CD4-positive, alpha-beta T cell (primary cell): ENCODE measurements at regions of chr12 and their contacts with region 1.

Region 1: GRCh38 chr12:123120452-123121166 is 30.3 kb downstream of the PITPNM2 start:
- DNase-seq: peak in 13 of 14 experiments; percentile 21 to 65 (median 39)
- ATAC-seq: peak; percentile 60
- H3K4me3 ChIP-seq: no peak overlapping the region
- H3K4me3 Mint-ChIP-seq: peak overlapping the region; percentile 82
- H3K27ac ChIP-seq: peak overlapping the region; percentile 58 to 77
- H3K27ac Mint-ChIP-seq: peak overlapping the region; percentile 99
- H3K4me1 ChIP-seq: peaks cover 67% of the 10 kb centered on the region
- H3K4me1 Mint-ChIP-seq: peaks cover 77% of the 10 kb centered on the region
- H3K27me3 ChIP-seq: no peaks in the 10 kb centered on the region
- H3K27me3 Mint-ChIP-seq: no peaks in the 10 kb centered on the region
- CTCF ChIP-seq: no peak

Region 2: GRCh38 chr12:123043536-123044001 is 77.0 kb before region 1 on chr12:
- CTCF ChIA-PET with region 1: interaction called, 6 read pairs
- POLR2A ChIA-PET with region 1: interaction called, 16 read pairs
- intact Hi-C with region 1: no loop called
- DNase-seq: peak; percentile 44 to 84 (median 68)
- ATAC-seq: peak; percentile 97
- H3K4me3 ChIP-seq: no peak overlapping the region
- H3K4me3 Mint-ChIP-seq: peak overlapping the region; percentile 42
- H3K27ac ChIP-seq: no peak overlapping the region
- H3K27ac Mint-ChIP-seq: peak overlapping the region; percentile 80
- H3K4me1 ChIP-seq: peaks cover 21% of the 10 kb centered on the region
- H3K4me1 Mint-ChIP-seq: peaks cover 27% of the 10 kb centered on the region
- H3K27me3 ChIP-seq: no peaks in the 10 kb centered on the region
- H3K27me3 Mint-ChIP-seq: no peaks in the 10 kb centered on the region
- CTCF ChIP-seq: peak; percentile 58

Region 3: DNA sequence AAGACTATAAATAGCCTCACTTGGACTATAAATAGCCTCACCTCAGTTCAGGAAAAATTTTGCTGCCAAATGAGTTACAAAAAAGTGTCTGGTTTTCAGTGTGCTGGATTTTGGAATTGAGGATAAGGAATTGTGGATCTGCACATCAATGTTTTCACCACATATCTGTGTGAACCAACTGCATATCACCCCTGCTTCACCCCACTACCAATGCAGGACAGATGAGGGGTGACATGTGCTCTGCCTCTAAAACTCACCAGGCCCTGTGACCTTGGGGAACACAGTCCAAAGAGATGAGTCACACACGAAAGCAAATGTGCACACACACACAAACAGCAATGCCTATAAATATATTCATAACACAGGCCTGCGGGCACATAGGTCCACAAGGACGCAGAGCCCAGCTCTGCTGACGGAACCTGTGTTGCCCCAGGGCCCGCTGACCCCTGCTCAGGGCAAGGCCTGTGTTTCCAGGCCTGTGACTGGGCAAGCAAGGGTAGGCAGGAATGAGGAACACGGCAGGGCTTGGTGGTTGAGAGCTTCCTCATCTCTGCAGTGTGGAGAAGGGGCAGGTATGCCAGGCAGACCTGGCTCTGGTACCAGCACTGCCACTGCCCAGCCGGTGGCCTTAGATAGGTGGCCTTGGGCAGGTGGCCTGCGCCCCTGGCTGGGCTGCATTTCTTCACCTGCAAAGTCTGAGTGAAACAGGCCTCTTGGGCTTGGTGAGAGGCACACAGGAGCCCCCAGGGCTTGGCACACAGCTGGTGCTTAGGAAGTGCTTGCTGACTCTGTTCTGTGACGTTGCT is 57.7 kb before region 1 on chr12:
- CTCF ChIA-PET with region 1: no interaction called
- POLR2A ChIA-PET with region 1: no interaction called
- intact Hi-C with region 1: no loop called
- DNase-seq: peak in 2 of 14 experiments; percentile 26 to 36
- ATAC-seq: no peak
- H3K4me3 ChIP-seq: no peak overlapping the region
- H3K4me3 Mint-ChIP-seq: no peak overlapping the region
- H3K27ac ChIP-seq: no peak overlapping the region
- H3K27ac Mint-ChIP-seq: peak overlapping the region; percentile 66
- H3K4me1 ChIP-seq: peaks cover 52% of the 10 kb centered on the region
- H3K4me1 Mint-ChIP-seq: peaks cover 60% of the 10 kb centered on the region
- H3K27me3 ChIP-seq: no peaks in the 10 kb centered on the region
- H3K27me3 Mint-ChIP-seq: no peaks in the 10 kb centered on the region
- CTCF ChIP-seq: no peak

Region 4: GRCh38 chr12:123106628-123107359 is 13.8 kb before region 1 on chr12:
- CTCF ChIA-PET with region 1: interaction called, 3 read pairs
- POLR2A ChIA-PET with region 1: interaction called, 58 read pairs
- intact Hi-C with region 1: no loop called
- DNase-seq: peak in 13 of 14 experiments; percentile 28 to 84 (median 57)
- ATAC-seq: peak; percentile 94
- H3K4me3 ChIP-seq: peak overlapping the region; percentile 29
- H3K4me3 Mint-ChIP-seq: peak overlapping the region; percentile 66
- H3K27ac ChIP-seq: peak overlapping the region; percentile 56 to 85
- H3K27ac Mint-ChIP-seq: peak overlapping the region; percentile 98
- H3K4me1 ChIP-seq: peaks cover 53% of the 10 kb centered on the region
- H3K4me1 Mint-ChIP-seq: peaks cover 64% of the 10 kb centered on the region
- H3K27me3 ChIP-seq: no peaks in the 10 kb centered on the region
- H3K27me3 Mint-ChIP-seq: no peaks in the 10 kb centered on the region
- CTCF ChIP-seq: no peak

Region 5: DNA sequence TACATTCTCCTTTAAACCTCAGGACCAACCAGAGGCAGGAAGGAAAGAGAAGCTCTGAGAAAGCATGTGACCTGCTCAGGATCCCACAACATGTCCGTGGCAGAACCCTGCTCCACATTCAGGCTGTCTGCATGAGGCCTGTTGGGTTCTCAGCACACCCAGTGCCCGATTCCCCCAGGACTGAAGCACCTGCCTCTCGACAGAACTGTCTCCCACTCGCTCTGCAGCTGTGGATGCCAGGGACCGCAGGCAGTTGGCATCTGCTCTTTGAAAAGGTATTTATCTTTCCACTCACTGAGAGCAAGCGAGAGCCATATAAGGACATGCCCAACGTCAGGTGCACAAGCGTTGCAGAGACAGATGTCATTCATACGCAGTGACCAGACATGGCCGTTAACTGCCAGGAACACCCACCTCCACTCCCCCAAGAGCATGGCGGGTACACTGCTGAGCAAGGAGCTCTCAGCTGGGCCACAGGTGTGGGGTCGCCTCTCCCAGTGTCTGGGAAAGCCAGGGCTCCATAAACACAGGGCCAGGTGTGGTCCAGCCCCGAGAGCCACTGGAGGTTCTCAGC is 11.4 kb after region 1 on chr12:
- CTCF ChIA-PET with region 1: no interaction called
- POLR2A ChIA-PET with region 1: interaction called, 47 read pairs
- intact Hi-C with region 1: no loop called
- DNase-seq: peak in 12 of 14 experiments; percentile 22 to 81 (median 51)
- ATAC-seq: peak; percentile 90
- H3K4me3 ChIP-seq: peak overlapping the region; percentile 25
- H3K4me3 Mint-ChIP-seq: peak overlapping the region; percentile 49
- H3K27ac ChIP-seq: peak overlapping the region; percentile 62 to 63
- H3K27ac Mint-ChIP-seq: peak overlapping the region; percentile 91
- H3K4me1 ChIP-seq: peaks cover 24% of the 10 kb centered on the region
- H3K4me1 Mint-ChIP-seq: peaks cover 58% of the 10 kb centered on the region
- H3K27me3 ChIP-seq: no peaks in the 10 kb centered on the region
- H3K27me3 Mint-ChIP-seq: no peaks in the 10 kb centered on the region
- CTCF ChIP-seq: no peak

Region 6: GRCh38 chr12:123142921-123143735 is 22.5 kb after region 1 on chr12:
- CTCF ChIA-PET with region 1: no interaction called
- POLR2A ChIA-PET with region 1: interaction called, 36 read pairs
- intact Hi-C with region 1: no loop called
- DNase-seq: peak in 1 of 14 experiments; percentile 32
- ATAC-seq: no peak
- H3K4me3 ChIP-seq: no peak overlapping the region
- H3K4me3 Mint-ChIP-seq: no peak overlapping the region
- H3K27ac ChIP-seq: no peak overlapping the region
- H3K27ac Mint-ChIP-seq: peak overlapping the region; percentile 54
- H3K4me1 ChIP-seq: peaks cover 9% of the 10 kb centered on the region
- H3K4me1 Mint-ChIP-seq: peaks cover 62% of the 10 kb centered on the region
- H3K27me3 ChIP-seq: no peaks in the 10 kb centered on the region
- H3K27me3 Mint-ChIP-seq: no peaks in the 10 kb centered on the region
- CTCF ChIP-seq: no peak

Region 7: DNA sequence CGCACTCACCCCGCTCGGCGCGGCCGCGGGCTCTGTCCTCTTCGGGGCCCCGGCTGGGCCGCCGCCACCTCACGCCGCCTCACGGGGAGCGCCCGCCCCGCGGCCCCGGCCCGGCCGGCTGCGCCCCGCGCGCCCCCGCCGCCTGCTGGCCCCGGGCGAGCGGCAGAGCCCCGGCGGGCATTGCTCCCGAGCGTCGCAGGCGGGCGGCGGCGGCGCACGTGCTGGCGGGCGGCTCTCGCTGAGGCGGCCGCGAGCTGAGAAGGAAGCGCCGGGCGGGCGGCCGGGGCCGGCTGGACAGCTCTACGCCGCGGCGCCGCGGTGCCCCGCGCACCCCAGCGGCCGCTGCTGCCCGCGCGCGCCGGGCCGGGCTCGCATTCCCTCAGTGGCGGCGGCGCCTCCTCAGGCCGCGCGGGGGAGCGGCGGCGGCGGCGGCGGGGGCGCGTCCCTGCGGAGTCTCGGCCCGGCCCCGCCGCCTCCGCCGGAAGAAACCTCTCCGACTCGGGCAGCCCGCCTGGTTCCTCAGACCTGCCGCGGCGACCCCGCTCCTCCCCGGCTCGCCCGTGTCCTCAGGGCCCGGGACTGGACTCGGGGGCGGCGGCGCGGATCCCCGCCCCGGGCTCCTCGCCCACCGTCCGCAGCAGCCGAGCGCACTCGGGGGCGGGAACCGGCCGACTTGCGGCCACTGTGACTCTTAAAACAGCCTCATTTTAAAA is 30.3 kb after region 1 on chr12 and contains the start of gene PITPNM2:
- CTCF ChIA-PET with region 1: no interaction called
- POLR2A ChIA-PET with region 1: interaction called, 36 read pairs
- intact Hi-C with region 1: no loop called
- DNase-seq: peak; percentile 28 to 87 (median 60)
- ATAC-seq: peak; percentile 86
- H3K4me3 ChIP-seq: peak within 1 kb of the TSS; percentile 76
- H3K4me3 Mint-ChIP-seq: peak within 1 kb of the TSS; percentile 93
- H3K27ac ChIP-seq: peak within 1 kb of the TSS; percentile 22 to 40
- H3K27ac Mint-ChIP-seq: peak within 1 kb of the TSS; percentile 89
- H3K4me1 ChIP-seq: peaks cover 27% of the 10 kb centered on the region
- H3K4me1 Mint-ChIP-seq: peaks cover 52% of the 10 kb centered on the region
- H3K27me3 ChIP-seq: no peaks in the 10 kb centered on the region
- H3K27me3 Mint-ChIP-seq: no peaks in the 10 kb centered on the region
- CTCF ChIP-seq: no peak
- total RNA-seq, gene PITPNM2: 37.3 to 38.3 TPM